Mammary epithelial cell (primary cell): ENCODE measurements at regions of chr7 and their contacts with region 1.

Region 1: GRCh38 chr7:2921653-2922347 is 77.7 kb upstream of the GNA12 start:
- DNase-seq: no peak
- H3K4me3 ChIP-seq: no peak overlapping the region
- H3K27ac ChIP-seq: no peak overlapping the region
- H3K4me1 ChIP-seq: peaks cover 13% of the 10 kb centered on the region
- H3K27me3 ChIP-seq: no peaks in the 10 kb centered on the region
- CTCF ChIP-seq: peak; percentile 33 to 34

Region 2: GRCh38 chr7:2387897-2388636 is 533.7 kb before region 1 on chr7:
- CTCF ChIA-PET with region 1: no interaction called
- dilution Hi-C with region 1: no loop called
- in situ Hi-C with region 1: no loop called
- intact Hi-C with region 1: no loop called
- DNase-seq: no peak
- H3K4me3 ChIP-seq: no peak overlapping the region
- H3K27ac ChIP-seq: no peak overlapping the region
- H3K4me1 ChIP-seq: no peaks in the 10 kb centered on the region
- H3K27me3 ChIP-seq: no peaks in the 10 kb centered on the region
- CTCF ChIP-seq: no peak

Region 3: DNA sequence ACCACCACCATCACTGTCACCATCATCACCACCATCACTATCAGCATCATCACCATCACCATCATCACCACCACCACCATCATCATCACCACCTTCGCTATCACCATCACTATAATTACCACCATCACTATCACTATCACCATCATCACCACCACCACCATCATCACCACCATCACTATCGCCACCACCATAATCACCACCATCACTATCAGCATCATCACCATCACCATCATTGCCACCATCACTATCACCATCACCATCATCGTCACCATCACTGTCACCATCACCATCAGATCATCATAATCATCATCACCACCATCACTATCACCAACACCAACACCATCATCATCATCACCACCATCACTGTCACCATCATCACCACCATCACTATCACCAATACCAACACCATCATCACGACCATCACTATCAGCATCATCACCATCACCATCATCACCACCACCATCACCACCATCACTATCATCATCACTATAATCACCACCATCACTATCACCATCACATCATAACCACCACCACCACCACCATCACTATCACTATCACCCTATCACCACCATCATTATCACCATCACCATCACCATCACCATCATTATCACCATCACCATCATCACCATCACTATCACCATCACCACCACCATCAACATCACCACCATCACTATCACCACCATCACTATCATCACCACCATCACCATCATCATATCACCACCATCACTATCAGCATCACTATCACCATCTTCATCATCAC is 71.6 kb before region 1 on chr7:
- CTCF ChIA-PET with region 1: no interaction called
- dilution Hi-C with region 1: no loop called
- in situ Hi-C with region 1: no loop called
- intact Hi-C with region 1: no loop called
- DNase-seq: no peak
- H3K4me3 ChIP-seq: no peak overlapping the region
- H3K27ac ChIP-seq: no peak overlapping the region
- H3K4me1 ChIP-seq: no peaks in the 10 kb centered on the region
- H3K27me3 ChIP-seq: no peaks in the 10 kb centered on the region
- CTCF ChIP-seq: no peak

Region 4: GRCh38 chr7:2993868-2994267 is 72.1 kb after region 1 on chr7:
- CTCF ChIA-PET with region 1: interaction called, 10 read pairs
- dilution Hi-C with region 1: no loop called
- in situ Hi-C with region 1: no loop called
- intact Hi-C with region 1: no loop called
- DNase-seq: no peak
- H3K4me3 ChIP-seq: no peak overlapping the region
- H3K27ac ChIP-seq: no peak overlapping the region
- H3K4me1 ChIP-seq: no peaks in the 10 kb centered on the region
- H3K27me3 ChIP-seq: no peaks in the 10 kb centered on the region
- CTCF ChIP-seq: no peak

Region 5: DNA sequence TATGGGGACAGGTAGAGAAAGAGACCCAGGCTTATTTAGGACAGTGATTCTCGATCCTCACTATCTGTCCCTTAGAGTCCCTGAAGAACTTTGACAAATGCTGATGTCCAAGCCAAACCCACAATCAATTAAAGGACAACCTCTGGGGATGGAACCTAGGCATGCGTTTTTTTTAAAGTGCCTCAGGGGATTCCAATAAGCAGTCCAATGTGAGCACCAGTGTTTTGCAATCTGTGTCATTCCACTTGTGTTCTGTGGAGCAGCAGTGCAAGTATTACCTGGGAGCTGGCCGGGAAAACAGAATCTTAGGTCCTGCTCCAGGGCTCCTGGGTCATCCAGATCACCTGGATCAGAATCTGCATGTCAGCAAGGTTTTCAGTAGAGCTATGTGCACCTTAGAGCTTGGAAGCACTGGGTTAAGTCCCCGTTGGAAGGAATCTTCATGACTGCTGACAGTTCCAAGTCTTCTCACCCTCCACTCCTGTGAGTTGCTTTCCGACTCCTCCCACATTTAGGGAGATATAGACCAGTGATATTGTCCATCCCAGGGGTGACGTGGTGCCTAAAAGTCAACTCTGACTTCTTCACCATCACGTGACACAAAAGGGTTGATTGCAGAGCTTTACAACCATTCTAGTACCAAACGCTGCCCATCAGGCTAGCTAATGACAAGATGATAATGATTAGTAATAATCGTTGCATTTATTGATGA is 206.8 kb after region 1 on chr7:
- CTCF ChIA-PET with region 1: no interaction called
- dilution Hi-C with region 1: no loop called
- in situ Hi-C with region 1: no loop called
- intact Hi-C with region 1: no loop called
- DNase-seq: no peak
- H3K4me3 ChIP-seq: no peak overlapping the region
- H3K27ac ChIP-seq: no peak overlapping the region
- H3K4me1 ChIP-seq: no peaks in the 10 kb centered on the region
- H3K27me3 ChIP-seq: no peaks in the 10 kb centered on the region
- CTCF ChIP-seq: no peak